Psoas muscle (tissue), 8 donors: ENCODE measurements at regions of chr1 and their contacts with region 1.

Region 1: DNA sequence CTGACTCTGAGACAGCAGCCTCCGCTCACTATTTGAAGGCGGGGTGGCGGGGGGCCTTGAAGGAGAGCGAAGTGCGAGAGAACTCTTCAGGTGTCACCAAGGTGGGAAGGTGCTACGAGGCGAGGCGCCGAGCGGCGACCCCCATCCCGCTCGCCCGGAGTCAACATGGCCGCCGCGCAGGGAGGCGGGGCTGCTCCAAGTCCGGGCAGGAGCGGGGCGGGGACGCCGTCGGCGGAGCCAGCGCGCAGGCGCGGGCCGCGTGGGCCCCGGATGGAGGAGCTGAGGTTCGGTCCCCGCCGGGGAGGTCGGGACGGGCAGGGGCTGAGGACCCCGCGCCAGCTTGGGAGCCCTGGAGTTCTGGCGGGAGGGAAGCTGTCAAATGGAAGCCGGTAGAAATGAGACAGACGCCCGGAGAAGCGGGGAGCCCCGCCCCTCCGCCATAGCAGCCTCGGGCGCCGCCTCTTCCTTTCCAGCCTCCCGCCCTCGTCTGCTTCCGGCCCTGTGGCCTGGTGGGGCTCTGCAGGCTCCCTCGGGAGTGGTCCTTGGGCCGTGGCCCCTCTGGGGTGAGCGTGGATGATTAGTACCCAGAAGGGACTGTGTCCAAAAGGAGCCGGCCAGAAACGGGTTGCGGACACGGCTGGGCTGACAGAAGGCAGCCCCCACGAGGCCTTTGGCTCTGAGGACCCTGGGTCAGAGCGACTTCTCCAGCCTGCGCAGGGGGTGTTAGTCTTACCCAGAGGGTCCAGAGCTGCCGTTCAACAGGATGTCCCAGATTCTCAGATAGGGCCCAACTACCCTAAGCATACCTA is at the start of gene PIGV:
- DNase-seq: peak; percentile 89 to 94
- ATAC-seq: peak; percentile 87 to 92 (median 90)
- H3K4me3 ChIP-seq: peak within 1 kb of the TSS; percentile 90
- H3K27ac ChIP-seq: peak within 1 kb of the TSS; percentile 98
- H3K4me1 ChIP-seq: peaks cover 39% of the 10 kb centered on the region
- H3K27me3 ChIP-seq: no peaks in the 10 kb centered on the region
- CTCF ChIP-seq: no peak
- total RNA-seq, gene PIGV: 4.2 to 7.4 (median 5.5) TPM

Region 2: GRCh38 chr1:26602378-26602959 is 185.4 kb before region 1 on chr1:
- intact Hi-C with region 1: loop called (anchors 1 kb)
- DNase-seq: no peak
- ATAC-seq: peak; percentile 54 to 83 (median 64)
- H3K4me3 ChIP-seq: no peak overlapping the region
- H3K27ac ChIP-seq: no peak overlapping the region
- H3K4me1 ChIP-seq: peaks cover 6% of the 10 kb centered on the region
- H3K27me3 ChIP-seq: no peaks in the 10 kb centered on the region
- CTCF ChIP-seq: peak; percentile 91

Region 3: DNA sequence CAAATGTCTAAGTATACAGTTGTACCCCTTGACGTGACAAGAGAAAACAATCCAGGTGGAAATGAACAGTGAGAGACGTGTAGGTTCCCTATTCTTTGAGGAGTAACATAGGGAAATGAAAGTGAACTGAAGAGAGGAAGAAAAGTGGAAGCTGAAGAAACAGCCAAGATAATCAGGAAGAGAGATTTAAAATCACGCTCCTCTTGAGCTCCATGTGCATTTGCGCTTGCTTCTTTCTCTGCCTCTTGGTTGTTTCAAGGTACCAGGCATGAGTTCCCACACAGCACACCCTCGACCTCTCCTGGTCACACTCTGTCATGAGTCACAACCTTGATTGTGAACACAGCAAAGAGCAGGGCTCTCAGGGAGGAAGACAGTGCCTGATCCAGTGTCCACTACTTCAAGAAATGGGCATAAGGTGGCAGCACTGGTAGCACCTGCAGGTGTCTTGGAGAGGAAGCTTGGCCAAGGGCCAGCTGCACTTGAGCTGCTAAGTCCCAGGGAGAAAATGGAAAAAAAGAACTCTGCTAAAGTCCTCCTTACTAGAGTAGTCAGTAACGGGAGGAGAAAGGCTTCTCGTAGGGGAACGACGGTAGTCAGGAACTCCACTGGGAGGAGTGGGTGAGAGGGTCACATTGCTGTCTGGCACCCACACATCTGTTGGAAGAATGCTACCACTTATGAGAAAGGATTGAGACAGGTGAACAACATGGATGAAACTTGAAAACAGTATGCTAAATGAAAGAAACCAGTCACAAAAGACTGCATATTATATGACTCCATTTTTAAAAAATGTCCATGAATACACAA is 110.4 kb before region 1 on chr1:
- intact Hi-C with region 1: loop called in 1 of 2 experiments (anchors 5 kb)
- DNase-seq: peak; percentile 61 to 86
- ATAC-seq: peak; percentile 100
- H3K4me3 ChIP-seq: peak overlapping the region; percentile 41
- H3K27ac ChIP-seq: peak overlapping the region; percentile 39
- H3K4me1 ChIP-seq: peaks cover 8% of the 10 kb centered on the region
- H3K27me3 ChIP-seq: no peaks in the 10 kb centered on the region
- CTCF ChIP-seq: peak; percentile 73

Region 4: DNA sequence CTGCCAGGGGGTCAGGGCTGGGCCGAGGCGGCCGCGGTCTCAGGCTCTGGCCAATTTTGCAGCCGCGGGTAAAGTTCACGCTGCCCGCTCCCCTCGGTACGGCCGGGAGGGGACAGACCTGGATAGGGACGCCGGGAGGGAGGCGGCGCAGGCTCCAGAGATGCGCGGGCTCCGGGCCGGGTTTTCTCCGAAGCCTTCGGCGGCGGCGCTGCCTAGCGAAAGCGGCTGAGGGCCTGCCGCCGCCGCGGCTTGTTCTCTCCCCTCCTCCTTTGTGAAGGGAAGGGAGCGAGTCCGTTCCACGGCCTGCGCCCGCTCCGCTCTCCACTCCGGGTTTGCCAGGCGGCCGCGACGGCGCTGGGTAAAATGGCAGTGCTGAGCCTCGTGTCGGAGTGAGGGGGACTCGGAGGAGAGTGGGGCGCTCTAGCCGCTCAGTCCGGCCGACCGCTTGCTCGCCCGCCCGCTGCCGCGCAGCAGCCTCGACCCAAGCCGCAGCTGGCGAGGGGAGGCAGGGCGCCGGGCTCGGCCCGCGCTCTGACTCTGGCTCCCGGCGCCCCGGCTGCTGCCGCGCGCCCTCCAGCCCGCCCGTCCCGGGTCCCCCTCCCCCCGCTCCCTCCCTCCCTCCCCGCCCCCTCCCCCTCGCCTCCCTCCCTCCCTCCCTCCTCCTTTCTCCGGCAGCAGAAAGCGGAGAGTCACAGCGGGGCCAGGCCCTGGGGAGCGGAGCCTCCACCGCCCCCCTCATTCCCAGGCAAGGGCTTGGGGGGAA is 92.4 kb before region 1 on chr1 and contains the start of gene ARID1A:
- intact Hi-C with region 1: loop called (anchors 2 to 5 kb)
- DNase-seq: peak; percentile 96 to 98
- ATAC-seq: peak; percentile 73 to 78 (median 76)
- H3K4me3 ChIP-seq: peak within 1 kb of the TSS; percentile 89
- H3K27ac ChIP-seq: peak within 1 kb of the TSS; percentile 92
- H3K4me1 ChIP-seq: peaks cover 56% of the 10 kb centered on the region
- H3K27me3 ChIP-seq: no peaks in the 10 kb centered on the region
- CTCF ChIP-seq: peak; percentile 7
- total RNA-seq, gene ARID1A: 32.2 to 44.4 (median 39.6) TPM

Region 5: DNA sequence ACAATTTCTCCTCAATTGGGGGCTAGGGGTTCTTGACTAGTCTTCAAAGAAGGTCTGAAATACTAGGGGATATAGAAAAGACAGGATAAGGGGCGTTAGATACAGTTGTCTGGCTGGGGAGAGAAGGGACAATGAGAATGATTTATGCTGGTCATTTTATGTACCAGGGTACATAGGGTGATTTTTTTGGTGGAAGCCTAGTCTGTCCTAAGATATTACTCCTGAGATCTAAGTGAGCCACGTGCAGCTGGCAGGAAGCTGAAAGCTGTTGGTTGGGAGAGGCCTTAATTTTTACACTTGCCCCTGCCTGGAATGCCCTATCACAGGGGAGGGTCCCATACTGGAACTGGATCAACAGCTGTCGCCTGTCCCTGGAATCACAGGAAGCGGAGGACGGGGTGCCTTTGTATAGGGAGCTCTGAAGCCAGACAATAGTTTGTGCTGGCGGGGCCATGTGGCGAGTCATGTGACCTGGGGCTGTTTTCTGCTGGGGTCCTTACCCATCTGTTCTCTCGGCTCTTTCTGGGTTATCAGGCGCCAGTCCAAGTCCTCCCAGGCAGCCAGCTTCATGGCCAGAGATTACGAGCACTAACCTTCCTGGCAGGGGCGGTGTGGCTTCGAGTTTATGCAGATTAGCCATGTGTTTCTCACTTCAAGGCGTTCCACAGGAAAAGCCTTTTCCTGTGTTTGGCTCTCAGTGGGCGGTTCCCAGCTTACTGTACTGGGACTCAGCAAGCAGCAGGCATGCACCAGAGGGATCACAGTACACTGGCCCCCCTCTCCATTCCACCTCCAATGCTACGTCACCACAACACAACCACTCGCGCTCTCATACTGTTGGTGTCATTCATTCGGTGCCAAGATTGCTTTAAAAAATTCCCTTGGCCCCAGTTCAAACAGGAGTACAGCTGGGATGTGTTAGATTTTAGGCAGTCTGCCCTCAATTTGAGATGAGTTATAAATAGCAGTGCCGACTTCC is 64.6 kb before region 1 on chr1:
- intact Hi-C with region 1: loop called in 1 of 2 experiments (anchors 2 kb)
- DNase-seq: peak; percentile 77 to 84
- ATAC-seq: peak; percentile 87 to 89 (median 88)
- H3K4me3 ChIP-seq: peak overlapping the region; percentile 20
- H3K27ac ChIP-seq: peak overlapping the region; percentile 54
- H3K4me1 ChIP-seq: peaks cover 73% of the 10 kb centered on the region
- H3K27me3 ChIP-seq: no peaks in the 10 kb centered on the region
- CTCF ChIP-seq: no peak

Region 6: GRCh38 chr1:26744075-26744959 is 43.6 kb before region 1 on chr1:
- intact Hi-C with region 1: loop called in 1 of 2 experiments (anchors 5 kb)
- DNase-seq: peak; percentile 54 to 76
- ATAC-seq: peak; percentile 82 to 96 (median 90)
- H3K4me3 ChIP-seq: no peak overlapping the region
- H3K27ac ChIP-seq: peak overlapping the region; percentile 67
- H3K4me1 ChIP-seq: peaks cover 45% of the 10 kb centered on the region
- H3K27me3 ChIP-seq: no peaks in the 10 kb centered on the region
- CTCF ChIP-seq: no peak